Ovary (tissue), 10 donors: ENCODE measurements at regions of chr9 and their contacts with region 1.

Region 1: DNA sequence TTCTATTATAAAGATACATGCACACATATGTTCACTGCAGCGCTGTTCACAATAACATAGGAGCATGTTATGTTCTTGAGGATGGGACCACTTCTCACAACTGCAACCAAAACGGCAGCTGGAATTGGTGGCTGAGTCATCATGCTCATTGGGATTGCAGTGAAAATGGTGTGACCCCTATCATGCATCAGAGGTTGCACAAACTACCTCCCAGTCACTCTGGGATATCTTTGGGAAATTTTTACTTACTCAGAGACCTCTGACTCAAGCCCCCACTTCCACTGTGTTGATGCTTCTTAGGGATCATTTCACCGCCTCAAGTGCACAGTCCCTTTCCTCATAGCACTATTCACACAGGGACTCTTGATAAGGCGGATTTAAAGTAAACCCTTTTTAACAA is 474.1 kb downstream of the BNC2 start:
- DNase-seq: no peak
- H3K4me3 ChIP-seq: no peak overlapping the region
- H3K27ac ChIP-seq: no peak overlapping the region
- H3K4me1 ChIP-seq: no peaks in the 10 kb centered on the region
- H3K27me3 ChIP-seq: no peaks in the 10 kb centered on the region
- CTCF ChIP-seq: no peak
- EP300 ChIP-seq: no peak
- POLR2A ChIP-seq: no peak

Region 2: GRCh38 chr9:15622318-15622971 is 773.9 kb before region 1 on chr9:
- intact Hi-C with region 1: no loop called
- DNase-seq: no peak
- H3K4me3 ChIP-seq: no peak overlapping the region
- H3K27ac ChIP-seq: no peak overlapping the region
- H3K4me1 ChIP-seq: no peaks in the 10 kb centered on the region
- H3K27me3 ChIP-seq: no peaks in the 10 kb centered on the region
- CTCF ChIP-seq: no peak
- EP300 ChIP-seq: no peak
- POLR2A ChIP-seq: no peak

Region 3: DNA sequence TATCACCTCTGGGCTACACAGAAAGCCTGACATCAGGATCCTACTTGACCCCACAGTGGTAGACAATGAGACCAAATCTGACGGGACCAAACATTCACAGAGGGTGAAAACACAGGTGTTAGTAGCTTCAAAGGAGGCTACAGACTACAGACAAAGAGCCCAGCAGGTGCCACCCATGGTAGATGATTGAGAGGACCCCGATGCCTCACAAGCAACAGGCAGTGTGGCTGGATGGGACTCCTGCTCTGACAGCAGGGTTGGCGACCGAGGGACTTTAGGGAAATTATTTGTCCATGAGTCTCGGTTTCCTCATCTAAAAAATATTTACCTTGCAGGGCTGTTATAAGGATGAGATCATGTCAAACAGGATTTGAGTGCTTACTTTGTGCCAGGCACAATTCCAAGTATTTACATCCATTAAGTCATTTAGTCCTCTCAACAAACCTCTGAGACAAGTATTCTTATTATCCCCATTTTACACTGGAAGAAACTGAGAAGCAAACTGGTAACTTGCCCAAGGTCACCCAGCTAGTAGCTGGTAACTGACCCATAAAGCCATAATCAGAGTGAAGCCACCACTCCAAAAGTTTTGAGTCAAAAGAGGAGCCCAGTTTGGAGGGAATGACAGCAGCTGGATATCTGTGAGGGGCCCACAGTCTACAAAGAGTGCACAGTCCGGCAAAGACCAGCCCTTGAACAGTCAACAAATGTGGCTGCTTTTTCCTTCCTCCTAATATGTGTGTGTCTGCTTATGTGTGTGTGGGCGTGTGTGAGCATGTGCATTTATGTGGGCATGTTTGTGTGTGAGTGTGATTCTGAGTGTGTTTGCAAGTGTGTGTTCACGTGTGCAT is 27.9 kb before region 1 on chr9:
- intact Hi-C with region 1: loop called in 1 of 4 experiments (anchors 1 kb)
- DNase-seq: no peak
- H3K4me3 ChIP-seq: no peak overlapping the region
- H3K27ac ChIP-seq: no peak overlapping the region
- H3K4me1 ChIP-seq: no peaks in the 10 kb centered on the region
- H3K27me3 ChIP-seq: no peaks in the 10 kb centered on the region
- CTCF ChIP-seq: no peak
- EP300 ChIP-seq: no peak
- POLR2A ChIP-seq: no peak